GM10248 (cell line): ENCODE measurements at regions of chr14 and their contacts with region 1.

Region 1: GRCh38 chr14:88189417-88190191 is 133.5 kb downstream of the KCNK10 start:
- DNase-seq: peak; percentile 58
- CTCF ChIP-seq: peak; percentile 70

Region 2: GRCh38 chr14:88168498-88169165 is 21.0 kb before region 1 on chr14:
- CTCF ChIA-PET with region 1: interaction called, 26 read pairs
- POLR2A ChIA-PET with region 1: no interaction called
- DNase-seq: peak; percentile 63
- CTCF ChIP-seq: peak; percentile 77

Region 3: DNA sequence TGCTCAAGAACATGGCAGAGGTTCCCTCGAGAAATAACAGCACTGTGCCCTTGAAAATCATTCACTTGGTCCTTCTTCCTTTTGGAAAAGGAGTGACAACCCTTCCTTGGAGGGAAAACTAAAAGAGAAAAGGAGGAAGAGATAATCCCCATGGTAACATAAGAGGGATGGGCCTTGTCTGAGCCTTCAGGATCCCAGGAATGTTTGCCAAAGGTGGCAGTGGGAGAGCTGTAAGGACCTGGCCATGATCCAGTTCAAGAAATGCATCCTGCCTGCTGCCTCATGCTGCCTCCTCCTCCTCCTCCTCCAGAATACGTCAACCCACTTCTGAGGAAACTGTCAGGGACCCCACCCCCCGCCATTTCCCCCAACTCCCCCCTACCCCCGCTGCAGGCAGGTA is 14.6 kb after region 1 on chr14:
- CTCF ChIA-PET with region 1: interaction called, 52 read pairs
- POLR2A ChIA-PET with region 1: no interaction called
- DNase-seq: no peak
- CTCF ChIP-seq: no peak

Region 4: DNA sequence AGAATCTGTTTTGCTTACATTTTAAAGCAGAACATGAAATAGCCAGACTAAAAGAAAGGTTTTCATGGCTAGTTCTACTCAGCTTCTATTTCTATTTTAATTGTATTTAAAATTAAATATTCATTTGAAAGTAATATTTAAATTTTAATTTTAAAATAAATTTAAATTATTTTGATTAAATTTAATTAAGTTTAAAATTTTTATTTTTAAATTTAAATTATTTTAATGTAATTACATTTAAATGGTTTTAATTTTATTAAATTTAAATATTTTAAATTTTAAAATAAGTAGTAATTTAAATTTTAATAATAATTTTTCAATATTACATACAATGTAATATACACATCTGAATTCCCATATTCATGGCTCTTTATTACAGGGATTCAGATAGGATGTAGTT is 150.8 kb after region 1 on chr14:
- CTCF ChIA-PET with region 1: no interaction called
- POLR2A ChIA-PET with region 1: no interaction called
- DNase-seq: no peak
- CTCF ChIP-seq: no peak

Region 5: GRCh38 chr14:88380405-88380804 is 190.8 kb after region 1 on chr14:
- CTCF ChIA-PET with region 1: interaction called, 30 read pairs
- POLR2A ChIA-PET with region 1: no interaction called
- DNase-seq: peak; percentile 13
- CTCF ChIP-seq: peak; percentile 18